B cell (primary cell): ENCODE measurements at regions of chr22 and their contacts with region 1.

Region 1: DNA sequence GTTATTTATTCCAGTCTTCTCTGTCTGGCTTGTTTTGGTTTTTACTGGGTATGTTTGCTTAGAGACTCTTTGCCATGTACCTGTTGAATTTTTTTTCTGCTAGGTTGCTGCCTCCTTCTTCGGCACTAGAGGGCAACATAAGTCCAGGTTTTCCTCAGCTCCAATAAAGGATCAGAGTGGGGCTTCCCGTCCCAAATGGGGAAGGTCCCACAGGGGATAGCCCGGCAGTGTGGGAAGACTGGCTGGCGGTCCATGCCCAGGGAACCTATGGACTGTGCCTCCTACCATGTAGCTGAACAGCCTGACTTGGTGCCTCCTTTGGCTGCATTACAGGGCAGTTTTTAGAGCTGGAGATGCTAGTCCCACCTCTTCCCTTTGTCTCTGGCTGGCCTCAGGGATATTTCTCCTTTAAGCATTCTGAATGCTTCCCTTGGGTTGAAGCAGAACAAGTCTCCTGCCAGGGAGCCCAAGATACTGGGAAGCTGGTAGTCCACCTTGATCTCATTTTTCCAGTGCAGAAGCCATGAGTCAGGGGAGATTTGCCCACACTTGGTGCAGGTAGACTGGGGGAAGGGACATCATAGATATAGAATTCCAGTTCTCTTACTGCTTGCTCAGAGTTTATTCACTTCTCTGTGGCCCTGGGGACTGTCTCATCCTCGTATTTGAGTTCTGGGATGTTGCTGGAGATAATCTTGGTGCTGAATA is 60.2 kb downstream of the BRD1 start:
- DNase-seq: peak; percentile 65
- ATAC-seq: peak; percentile 59
- H3K4me3 ChIP-seq: no peak overlapping the region
- H3K4me3 Mint-ChIP-seq: no peak overlapping the region
- H3K27ac ChIP-seq: no peak overlapping the region
- H3K27ac Mint-ChIP-seq: no peak overlapping the region
- H3K4me1 ChIP-seq: no peaks in the 10 kb centered on the region
- H3K4me1 Mint-ChIP-seq: peaks cover 4% of the 10 kb centered on the region
- H3K27me3 ChIP-seq: no peaks in the 10 kb centered on the region
- H3K27me3 Mint-ChIP-seq: no peaks in the 10 kb centered on the region
- CTCF ChIP-seq: peak; percentile 79

Region 2: GRCh38 chr22:49925525-49926128 is 158.1 kb after region 1 on chr22:
- CTCF ChIA-PET with region 1: interaction called, 11 read pairs
- POLR2A ChIA-PET with region 1: no interaction called
- intact Hi-C with region 1: loop called (anchors 1 kb)
- DNase-seq: peak; percentile 96
- ATAC-seq: peak; percentile 74
- H3K4me3 ChIP-seq: peak overlapping the region in 4 of 5 experiments; percentile 37 to 53 (median 44)
- H3K4me3 Mint-ChIP-seq: peak overlapping the region; percentile 87
- H3K27ac ChIP-seq: peak overlapping the region; percentile 95 to 98
- H3K27ac Mint-ChIP-seq: peak overlapping the region; percentile 98
- H3K4me1 ChIP-seq: peaks cover 48 to 57% of the 10 kb centered on the region in 2 donors
- H3K4me1 Mint-ChIP-seq: peaks cover 55% of the 10 kb centered on the region
- H3K27me3 ChIP-seq: no peaks in the 10 kb centered on the region
- H3K27me3 Mint-ChIP-seq: no peaks in the 10 kb centered on the region
- CTCF ChIP-seq: no peak

Region 3: DNA sequence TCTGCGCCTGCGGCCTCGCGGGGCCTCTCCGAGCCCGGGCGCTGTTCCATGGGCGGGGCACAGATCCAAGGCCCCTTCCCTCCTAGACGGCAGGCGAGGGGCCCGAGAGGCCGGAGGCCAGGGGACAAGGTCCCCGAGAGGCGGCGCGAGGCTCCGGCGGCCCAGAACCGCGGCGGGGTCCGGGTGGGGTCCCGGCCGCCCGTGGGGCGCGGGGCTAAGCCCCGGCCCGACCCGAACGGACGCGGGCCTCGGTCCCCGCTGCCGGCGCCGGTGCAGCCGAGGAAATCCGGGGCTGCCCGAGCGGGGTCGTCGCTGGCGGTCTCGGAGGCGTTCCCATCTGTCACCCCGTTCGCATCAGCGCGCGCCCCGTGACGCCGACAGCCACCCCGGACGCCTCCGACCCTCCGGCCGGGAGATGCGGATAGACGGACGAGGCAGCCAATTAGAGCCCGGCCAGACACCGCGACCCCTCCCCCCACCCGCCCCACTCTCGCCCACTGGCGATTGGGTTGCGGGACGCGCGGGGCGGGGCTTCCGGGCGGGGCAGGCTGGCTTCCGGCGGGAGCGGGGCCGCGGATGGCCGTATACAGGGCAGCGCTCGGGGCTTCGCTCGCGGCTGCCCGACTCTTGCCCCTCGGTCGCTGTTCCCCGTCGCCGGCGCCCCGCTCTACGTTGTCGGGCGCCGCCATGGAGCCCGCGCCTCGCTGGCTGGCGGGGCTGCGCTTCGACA is 433.1 kb after region 1 on chr22 and contains the start of gene SELENOO:
- CTCF ChIA-PET with region 1: no interaction called
- POLR2A ChIA-PET with region 1: no interaction called
- intact Hi-C with region 1: loop called (anchors 10 kb)
- DNase-seq: peak; percentile 96
- ATAC-seq: peak; percentile 92
- H3K4me3 ChIP-seq: peak within 1 kb of the TSS; percentile 25 to 80 (median 70)
- H3K4me3 Mint-ChIP-seq: peak within 1 kb of the TSS; percentile 89
- H3K27ac ChIP-seq: peak within 1 kb of the TSS; percentile 23 to 81
- H3K27ac Mint-ChIP-seq: peak within 1 kb of the TSS; percentile 86
- H3K4me1 ChIP-seq: peaks cover 16 to 26% of the 10 kb centered on the region in 2 donors
- H3K4me1 Mint-ChIP-seq: peaks cover 26% of the 10 kb centered on the region
- H3K27me3 ChIP-seq: no peaks in the 10 kb centered on the region
- H3K27me3 Mint-ChIP-seq: no peaks in the 10 kb centered on the region
- CTCF ChIP-seq: no peak
- total RNA-seq, gene SELENOO: 73.0 and 74.6 TPM in 2 replicates

Region 4: GRCh38 chr22:50628543-50629134 is 861.1 kb after region 1 on chr22:
- CTCF ChIA-PET with region 1: no interaction called
- POLR2A ChIA-PET with region 1: no interaction called
- intact Hi-C with region 1: no loop called
- DNase-seq: no peak
- ATAC-seq: no peak
- H3K4me3 ChIP-seq: peak overlapping the region; percentile 72 to 92 (median 80)
- H3K4me3 Mint-ChIP-seq: peak overlapping the region; percentile 94
- H3K27ac ChIP-seq: peak overlapping the region in 1 of 2 donors; percentile 70
- H3K27ac Mint-ChIP-seq: peak overlapping the region; percentile 80
- H3K4me1 ChIP-seq: peaks cover 12 to 21% of the 10 kb centered on the region in 2 donors
- H3K4me1 Mint-ChIP-seq: peaks cover 17% of the 10 kb centered on the region
- H3K27me3 ChIP-seq: no peaks in the 10 kb centered on the region
- H3K27me3 Mint-ChIP-seq: no peaks in the 10 kb centered on the region
- CTCF ChIP-seq: no peak